ENCODE measurements at regions of chr21 and their contacts with region 1.

Region 1: DNA sequence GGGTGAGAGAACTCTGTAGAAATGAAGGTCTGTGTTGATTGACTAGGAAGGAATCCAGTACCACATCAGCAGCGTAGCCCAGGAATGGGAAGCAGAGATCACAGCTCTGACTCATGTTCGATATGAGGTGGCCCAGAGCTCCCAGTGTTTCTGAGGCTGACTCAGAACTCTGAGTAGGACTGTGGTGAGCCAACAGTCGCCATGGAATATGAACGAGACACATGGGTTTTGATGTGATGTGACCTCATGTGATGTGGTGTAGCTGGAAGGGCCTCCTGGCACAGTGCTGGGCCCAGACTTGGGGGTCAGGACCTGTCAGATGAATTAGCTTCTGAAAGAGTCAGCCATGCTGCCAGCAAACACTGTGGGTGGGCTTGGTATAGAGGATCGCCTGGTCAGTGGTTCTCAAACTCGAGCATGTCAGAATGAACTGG is 237.0 kb downstream of the MRPL39 start:
- DNase-seq: peak; percentile 91
- H3K4me3 Mint-ChIP-seq: peak overlapping the region; percentile 30
- H3K27ac Mint-ChIP-seq: peak overlapping the region; percentile 77
- H3K4me1 Mint-ChIP-seq: peaks cover 15% of the 10 kb centered on the region
- H3K27me3 Mint-ChIP-seq: no peaks in the 10 kb centered on the region
- CTCF ChIP-seq: no peak

Region 2: GRCh38 chr21:24895885-24896734 is 474.2 kb before region 1 on chr21:
- CTCF ChIA-PET with region 1: no interaction called
- POLR2A ChIA-PET with region 1: no interaction called
- intact Hi-C with region 1: no loop called
- DNase-seq: peak; percentile 69
- H3K4me3 Mint-ChIP-seq: no peak overlapping the region
- H3K27ac Mint-ChIP-seq: no peak overlapping the region
- H3K4me1 Mint-ChIP-seq: peaks cover 7% of the 10 kb centered on the region
- H3K27me3 Mint-ChIP-seq: no peaks in the 10 kb centered on the region
- CTCF ChIP-seq: peak; percentile 45

Region 3: GRCh38 chr21:25329227-25329825 is 41.0 kb before region 1 on chr21:
- CTCF ChIA-PET with region 1: interaction called, 3 read pairs
- POLR2A ChIA-PET with region 1: interaction called, 7 read pairs
- intact Hi-C with region 1: loop called (anchors 10 kb)
- DNase-seq: peak; percentile 69
- H3K4me3 Mint-ChIP-seq: no peak overlapping the region
- H3K27ac Mint-ChIP-seq: peak overlapping the region; percentile 9
- H3K4me1 Mint-ChIP-seq: peaks cover 31% of the 10 kb centered on the region
- H3K27me3 Mint-ChIP-seq: no peaks in the 10 kb centered on the region
- CTCF ChIP-seq: no peak

Region 4: GRCh38 chr21:25390701-25391100 is 20.4 kb after region 1 on chr21:
- CTCF ChIA-PET with region 1: no interaction called
- POLR2A ChIA-PET with region 1: no interaction called
- intact Hi-C with region 1: no loop called
- DNase-seq: no peak
- H3K4me3 Mint-ChIP-seq: no peak overlapping the region
- H3K27ac Mint-ChIP-seq: no peak overlapping the region
- H3K4me1 Mint-ChIP-seq: peaks cover 18% of the 10 kb centered on the region
- H3K27me3 Mint-ChIP-seq: no peaks in the 10 kb centered on the region
- CTCF ChIP-seq: no peak

Region 5: DNA sequence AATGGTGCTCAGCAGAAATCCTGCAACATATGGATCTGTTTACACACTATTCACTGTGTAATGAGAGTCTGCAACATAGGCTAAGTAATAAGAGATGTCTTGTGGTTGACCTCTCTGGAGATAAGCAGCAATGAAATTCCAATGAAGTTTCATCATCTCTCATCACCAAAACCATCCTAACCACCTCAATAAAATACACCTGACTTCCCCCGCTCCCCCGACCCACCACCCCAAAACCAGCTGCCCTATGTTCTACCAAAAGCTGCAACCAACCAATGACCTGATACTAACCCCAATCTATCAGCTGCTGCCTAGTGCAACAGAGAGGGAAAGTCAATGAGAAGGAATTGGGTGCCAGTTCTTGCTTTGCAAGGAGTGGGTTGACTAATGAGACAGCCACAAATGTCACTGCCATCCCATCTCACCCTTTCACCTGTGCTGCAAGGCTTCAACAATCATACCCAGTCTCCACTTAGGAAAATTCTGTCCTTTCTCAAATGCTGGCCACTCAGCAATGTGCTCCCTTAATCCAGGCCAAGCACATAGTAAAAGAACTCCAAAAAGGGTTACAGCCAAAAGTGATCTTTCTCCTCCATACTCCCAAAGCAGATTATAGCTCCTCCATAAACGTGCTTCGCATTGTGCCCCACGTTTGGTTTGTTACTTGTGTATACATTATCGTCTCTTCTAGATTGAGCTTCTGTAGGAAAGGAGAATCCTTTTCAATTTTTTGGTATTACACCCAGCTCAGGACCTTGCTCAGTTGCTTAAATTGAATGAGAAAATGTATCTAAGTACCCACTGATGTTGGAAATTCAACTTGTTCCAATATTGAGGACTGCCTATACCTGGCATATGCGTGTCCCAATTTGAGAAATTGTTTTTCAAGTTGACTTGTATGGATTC is 208.0 kb after region 1 on chr21:
- CTCF ChIA-PET with region 1: no interaction called
- POLR2A ChIA-PET with region 1: no interaction called
- intact Hi-C with region 1: no loop called
- DNase-seq: no peak
- H3K4me3 Mint-ChIP-seq: no peak overlapping the region
- H3K27ac Mint-ChIP-seq: no peak overlapping the region
- H3K4me1 Mint-ChIP-seq: peaks cover 5% of the 10 kb centered on the region
- H3K27me3 Mint-ChIP-seq: no peaks in the 10 kb centered on the region
- CTCF ChIP-seq: no peak